Thyroid gland (tissue), 4 donors: ENCODE measurements at regions of chr2 and their contacts with region 1.

Region 1: GRCh38 chr2:37414470-37414949 is 70.1 kb downstream of the QPCT start:
- DNase-seq: peak in 1 of 2 donors; percentile 8
- H3K4me3 ChIP-seq: no peak overlapping the region
- H3K27ac ChIP-seq: no peak overlapping the region
- H3K4me1 ChIP-seq: no peaks in the 10 kb centered on the region
- H3K27me3 ChIP-seq: no peaks in the 10 kb centered on the region
- CTCF ChIP-seq: peak; percentile 69 to 97 (median 86)
- POLR2A ChIP-seq: no peak

Region 2: DNA sequence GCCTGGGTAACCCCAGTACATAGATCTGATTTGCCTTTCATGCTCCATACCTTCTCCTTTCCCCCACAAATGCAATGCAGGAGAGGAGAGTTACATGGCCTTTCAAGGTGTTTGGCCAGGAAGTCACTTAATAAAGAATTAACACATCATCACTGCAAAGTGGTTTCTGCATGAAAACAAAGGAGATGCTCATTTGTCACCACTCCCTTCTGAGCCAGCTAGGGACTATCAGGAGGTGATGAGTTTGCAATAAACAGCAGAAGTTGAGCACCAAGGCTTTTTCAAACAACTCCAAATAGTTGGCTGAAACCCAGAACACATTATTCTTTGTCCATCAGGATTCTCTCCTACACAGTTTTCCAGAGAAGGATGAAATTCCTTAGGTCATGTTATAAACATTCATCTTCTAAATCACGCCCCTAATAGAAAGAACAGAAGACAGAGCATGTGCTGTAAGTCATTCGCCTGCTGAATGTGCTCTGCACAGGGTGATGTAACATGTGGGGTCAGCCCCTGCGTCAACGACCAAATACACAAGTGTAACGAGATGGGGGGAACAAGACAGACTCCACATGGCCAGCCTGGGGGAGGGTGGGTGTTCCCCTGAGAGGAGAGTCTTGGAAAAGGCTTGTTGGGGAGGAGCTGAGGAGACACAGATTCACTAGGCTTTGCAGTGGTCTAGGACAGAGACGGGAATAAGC is 423.3 kb after region 1 on chr2:
- intact Hi-C with region 1: loop called (anchors 5 kb)
- DNase-seq: peak in 1 of 2 donors; percentile 8
- H3K4me3 ChIP-seq: no peak overlapping the region
- H3K27ac ChIP-seq: no peak overlapping the region
- H3K4me1 ChIP-seq: no peaks in the 10 kb centered on the region
- H3K27me3 ChIP-seq: no peaks in the 10 kb centered on the region
- CTCF ChIP-seq: no peak
- POLR2A ChIP-seq: no peak